Astrocyte of the cerebellum (primary cell): ENCODE measurements at regions of chr15 and their contacts with region 1.

Region 1: DNA sequence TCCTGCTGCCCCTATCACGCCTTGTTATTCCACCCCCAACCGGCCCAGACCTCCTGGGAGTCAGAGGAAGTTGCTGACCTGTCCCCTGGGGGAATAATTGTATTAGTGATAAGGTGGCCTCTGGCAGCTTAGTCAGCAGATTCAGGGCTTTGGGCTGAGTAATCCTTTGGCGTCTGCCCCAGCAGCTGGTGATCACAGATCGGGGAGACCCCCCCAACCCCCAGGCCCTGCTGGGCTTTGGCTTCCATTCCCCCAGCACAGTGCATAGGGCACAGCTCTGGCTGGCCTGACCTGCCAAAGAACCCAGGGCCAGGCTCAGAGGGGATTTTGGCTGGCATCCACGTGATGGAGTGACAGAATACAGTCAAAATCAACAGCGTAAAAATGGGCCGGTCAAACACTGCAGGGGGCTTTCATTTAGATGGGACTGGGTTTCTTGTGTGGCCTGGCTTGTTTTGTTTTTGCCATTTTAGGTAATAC is 3.9 kb upstream of the NR2E3 start:
- DNase-seq: no peak
- H3K4me3 ChIP-seq: no peak overlapping the region
- CTCF ChIP-seq: no peak

Region 2: DNA sequence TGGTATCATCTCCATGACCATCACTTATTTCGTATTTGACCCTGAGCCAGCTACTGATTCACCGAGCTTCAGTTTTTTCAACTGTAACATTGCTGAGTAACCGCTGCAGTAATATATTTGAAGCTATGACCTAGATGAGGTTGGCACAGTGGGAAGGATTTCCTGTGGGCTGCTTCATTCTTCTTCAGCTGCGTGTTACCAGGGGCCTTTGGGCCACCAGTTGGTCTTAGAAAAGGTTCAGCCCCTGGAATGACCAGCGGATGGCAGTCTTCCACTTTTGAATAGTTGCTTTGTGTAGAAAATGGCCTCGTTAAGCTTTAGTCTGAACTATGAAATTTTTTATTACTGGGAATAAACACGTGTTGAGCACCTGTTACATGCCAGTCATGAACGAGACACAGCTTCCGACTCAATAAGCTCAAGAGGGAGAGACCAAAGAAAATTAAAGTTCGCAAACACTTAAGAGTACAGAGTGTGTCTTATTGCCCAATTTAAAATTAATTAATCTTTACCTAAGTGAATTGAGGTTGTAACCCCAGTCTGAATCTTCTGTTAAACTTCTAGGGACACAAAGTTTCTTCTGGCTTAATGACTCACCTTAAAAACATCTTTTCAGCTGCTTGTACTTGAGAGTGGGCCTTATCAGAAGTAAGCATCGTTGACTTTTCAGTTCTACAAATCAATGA is 53.7 kb before region 1 on chr15:
- in situ Hi-C with region 1: loop called (anchors 5 kb)
- DNase-seq: peak; percentile 99
- H3K4me3 ChIP-seq: no peak overlapping the region
- CTCF ChIP-seq: peak; percentile 82